Mammary epithelial cell (primary cell): ENCODE measurements at regions of chr1 and their contacts with region 1.

Region 1: GRCh38 chr1:2429780-2430591 is 17.6 kb upstream of the PEX10 start:
- DNase-seq: no peak
- H3K4me3 ChIP-seq: peak overlapping the region; percentile 70 to 83 (median 75)
- H3K27ac ChIP-seq: peak overlapping the region; percentile 74
- H3K4me1 ChIP-seq: peaks cover 54% of the 10 kb centered on the region
- H3K27me3 ChIP-seq: no peaks in the 10 kb centered on the region
- CTCF ChIP-seq: peak; percentile 63 to 79

Region 2: DNA sequence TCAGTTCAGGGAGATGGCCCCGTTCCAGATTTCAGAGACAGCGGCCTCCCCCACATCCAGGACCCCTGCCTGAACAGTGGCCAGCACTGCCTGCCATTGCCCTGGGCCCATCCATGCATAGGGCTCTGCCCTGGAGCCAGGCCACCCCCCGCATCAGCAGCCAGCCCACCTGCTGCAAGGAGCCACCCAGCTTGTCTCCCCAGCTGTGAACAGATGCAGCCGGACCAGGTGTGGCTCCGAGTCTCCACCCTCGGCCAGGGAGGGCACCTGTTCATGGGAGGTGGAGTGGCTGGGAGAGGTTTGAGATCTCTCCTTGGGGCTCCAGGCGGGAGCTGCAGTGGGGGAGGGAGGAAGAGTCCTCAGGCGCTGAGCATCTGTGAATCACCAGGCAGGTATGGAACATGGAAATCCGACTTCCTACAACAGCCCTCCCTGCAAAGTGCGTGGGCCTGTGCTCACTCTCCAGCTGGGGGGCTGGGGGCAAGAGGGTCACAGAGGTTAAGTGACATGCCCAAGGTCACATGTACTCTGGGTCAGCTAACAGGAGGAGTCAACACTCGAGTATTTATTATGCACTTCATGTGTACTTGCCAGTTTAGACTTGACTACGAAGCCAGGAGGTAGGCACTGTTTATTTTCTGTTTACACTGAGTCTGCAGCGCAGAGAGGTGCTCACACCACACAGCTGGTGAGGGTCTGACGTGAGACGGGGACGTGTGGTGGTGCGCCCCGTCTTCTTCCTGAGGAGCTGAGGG is 104.9 kb after region 1 on chr1:
- CTCF ChIA-PET with region 1: interaction called, 14 read pairs
- dilution Hi-C with region 1: no loop called
- in situ Hi-C with region 1: loop called in 1 of 2 experiments (anchors 10 kb)
- intact Hi-C with region 1: no loop called
- DNase-seq: peak; percentile 89
- H3K4me3 ChIP-seq: no peak overlapping the region
- H3K27ac ChIP-seq: no peak overlapping the region
- H3K4me1 ChIP-seq: peaks cover 60% of the 10 kb centered on the region
- H3K27me3 ChIP-seq: peaks cover 4% of the 10 kb centered on the region
- CTCF ChIP-seq: no peak

Region 3: GRCh38 chr1:2561898-2562545 is 132.0 kb after region 1 on chr1:
- CTCF ChIA-PET with region 1: no interaction called
- dilution Hi-C with region 1: loop called (anchors 10 kb)
- in situ Hi-C with region 1: no loop called
- intact Hi-C with region 1: no loop called
- DNase-seq: no peak
- H3K4me3 ChIP-seq: no peak overlapping the region
- H3K27ac ChIP-seq: no peak overlapping the region
- H3K4me1 ChIP-seq: peaks cover 4% of the 10 kb centered on the region
- H3K27me3 ChIP-seq: no peaks in the 10 kb centered on the region
- CTCF ChIP-seq: peak; percentile 30 to 57

Region 4: GRCh38 chr1:2594001-2594640 is 164.1 kb after region 1 on chr1:
- CTCF ChIA-PET with region 1: no interaction called
- dilution Hi-C with region 1: loop called (anchors 10 kb)
- in situ Hi-C with region 1: no loop called
- intact Hi-C with region 1: no loop called
- DNase-seq: peak; percentile 20
- H3K4me3 ChIP-seq: peak overlapping the region in 2 of 3 experiments; percentile 25 to 32
- H3K27ac ChIP-seq: no peak overlapping the region
- H3K4me1 ChIP-seq: peaks cover 6% of the 10 kb centered on the region
- H3K27me3 ChIP-seq: no peaks in the 10 kb centered on the region
- CTCF ChIP-seq: no peak